Naive thymus-derived CD4-positive, alpha-beta T cell (primary cell): ENCODE measurements at regions of chr1 and their contacts with region 1.

Region 1: GRCh38 chr1:218330043-218330623 is 15.0 kb upstream of the TGFB2 start:
- DNase-seq: peak in 4 of 9 donors; percentile 17 to 41 (median 32)
- ATAC-seq: peak; percentile 73
- H3K4me3 ChIP-seq: no peak overlapping the region
- H3K4me3 Mint-ChIP-seq: no peak overlapping the region
- H3K27ac ChIP-seq: no peak overlapping the region
- H3K27ac Mint-ChIP-seq: no peak overlapping the region
- H3K4me1 ChIP-seq: no peaks in the 10 kb centered on the region
- H3K4me1 Mint-ChIP-seq: peaks cover 0 to 3% (median 0%) of the 10 kb centered on the region in 7 donors
- H3K27me3 ChIP-seq: no peaks in the 10 kb centered on the region
- H3K27me3 Mint-ChIP-seq: no peaks in the 10 kb centered on the region

Region 2: DNA sequence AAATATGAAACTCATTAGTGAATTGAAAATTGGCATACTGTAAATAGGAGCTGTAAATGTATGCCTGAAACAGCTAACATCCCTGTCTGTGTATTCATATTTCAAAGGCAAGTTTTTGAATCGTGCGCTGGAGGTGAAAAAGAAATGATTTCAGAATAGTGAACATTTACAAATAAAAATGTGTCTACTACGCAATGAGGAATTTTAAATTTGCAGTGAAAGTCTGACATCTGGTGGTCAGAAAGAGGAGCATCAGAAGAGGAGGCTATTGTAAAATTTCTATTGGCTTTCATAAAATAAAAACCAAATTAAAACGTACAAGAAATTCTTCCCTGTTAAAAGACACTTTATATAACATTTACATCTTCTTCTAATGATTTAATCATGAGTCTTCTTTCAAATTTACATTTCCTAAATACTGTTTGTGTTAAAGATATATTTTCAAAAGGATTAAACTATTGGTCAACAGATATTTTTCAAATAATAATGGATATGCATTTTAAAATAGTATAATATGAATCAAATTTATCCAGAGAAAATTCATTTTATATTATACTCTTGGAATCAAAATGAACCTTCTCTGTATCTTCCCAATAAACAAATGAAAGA is 158.7 kb before region 1 on chr1:
- CTCF ChIA-PET with region 1: no interaction called
- POLR2A ChIA-PET with region 1: no interaction called
- intact Hi-C with region 1: no loop called
- DNase-seq: no peak
- ATAC-seq: no peak
- H3K4me3 ChIP-seq: no peak overlapping the region
- H3K4me3 Mint-ChIP-seq: no peak overlapping the region
- H3K27ac ChIP-seq: no peak overlapping the region
- H3K27ac Mint-ChIP-seq: no peak overlapping the region
- H3K4me1 ChIP-seq: no peaks in the 10 kb centered on the region
- H3K4me1 Mint-ChIP-seq: peaks cover 0 to 2% (median 0%) of the 10 kb centered on the region in 7 donors
- H3K27me3 ChIP-seq: no peaks in the 10 kb centered on the region
- H3K27me3 Mint-ChIP-seq: peaks cover 20 to 59% (median 29%) of the 10 kb centered on the region in 5 donors

Region 3: GRCh38 chr1:218303176-218303879 is 26.8 kb before region 1 on chr1:
- CTCF ChIA-PET with region 1: no interaction called
- POLR2A ChIA-PET with region 1: no interaction called
- intact Hi-C with region 1: no loop called
- DNase-seq: no peak
- ATAC-seq: no peak
- H3K4me3 ChIP-seq: no peak overlapping the region
- H3K4me3 Mint-ChIP-seq: no peak overlapping the region
- H3K27ac ChIP-seq: no peak overlapping the region
- H3K27ac Mint-ChIP-seq: no peak overlapping the region
- H3K4me1 ChIP-seq: no peaks in the 10 kb centered on the region
- H3K4me1 Mint-ChIP-seq: peaks cover 1 to 32% (median 23%) of the 10 kb centered on the region in 7 donors
- H3K27me3 ChIP-seq: no peaks in the 10 kb centered on the region
- H3K27me3 Mint-ChIP-seq: no peaks in the 10 kb centered on the region

Region 4: DNA sequence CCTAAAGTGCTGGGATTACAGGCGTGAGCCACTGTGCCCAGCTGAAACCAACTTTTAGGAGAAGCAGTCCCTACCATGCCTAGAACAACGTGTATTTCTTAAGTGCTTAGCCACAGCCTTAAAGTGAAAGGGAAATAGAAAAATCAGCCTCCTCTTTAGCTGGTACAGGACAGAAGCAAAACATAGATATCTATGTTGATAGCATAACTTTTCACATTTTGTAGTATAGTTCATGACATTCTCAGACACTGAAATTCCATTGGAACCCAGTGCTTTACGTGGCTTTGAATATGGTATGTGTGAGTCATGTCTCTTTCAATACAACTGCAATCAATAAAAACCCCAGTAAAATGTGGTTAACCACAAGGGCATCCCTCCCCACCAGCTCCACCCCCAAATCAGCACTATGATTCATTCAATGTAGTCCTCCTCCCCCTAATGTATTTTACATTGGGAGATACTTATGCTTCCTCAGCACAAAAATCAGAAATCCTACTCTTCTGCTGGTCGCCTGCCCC is 47.1 kb after region 1 on chr1:
- CTCF ChIA-PET with region 1: no interaction called
- POLR2A ChIA-PET with region 1: no interaction called
- intact Hi-C with region 1: loop called in 1 of 2 experiments (anchors 1 kb)
- DNase-seq: peak in 8 of 9 donors; percentile 3 to 68 (median 8)
- ATAC-seq: peak; percentile 77
- H3K4me3 ChIP-seq: no peak overlapping the region
- H3K4me3 Mint-ChIP-seq: peak overlapping the region in 1 of 10 donors; percentile 23
- H3K27ac ChIP-seq: no peak overlapping the region
- H3K27ac Mint-ChIP-seq: no peak overlapping the region
- H3K4me1 ChIP-seq: no peaks in the 10 kb centered on the region
- H3K4me1 Mint-ChIP-seq: peaks cover 0 to 10% (median 7%) of the 10 kb centered on the region in 7 donors
- H3K27me3 ChIP-seq: no peaks in the 10 kb centered on the region
- H3K27me3 Mint-ChIP-seq: peaks cover 14 to 35% (median 28%) of the 10 kb centered on the region in 5 donors

Region 5: GRCh38 chr1:218642033-218642998 is 312.2 kb after region 1 on chr1:
- CTCF ChIA-PET with region 1: no interaction called
- POLR2A ChIA-PET with region 1: no interaction called
- intact Hi-C with region 1: no loop called
- DNase-seq: no peak
- ATAC-seq: no peak
- H3K4me3 ChIP-seq: no peak overlapping the region
- H3K4me3 Mint-ChIP-seq: no peak overlapping the region
- H3K27ac ChIP-seq: no peak overlapping the region
- H3K27ac Mint-ChIP-seq: no peak overlapping the region
- H3K4me1 ChIP-seq: no peaks in the 10 kb centered on the region
- H3K4me1 Mint-ChIP-seq: no peaks in the 10 kb centered on the region
- H3K27me3 ChIP-seq: no peaks in the 10 kb centered on the region
- H3K27me3 Mint-ChIP-seq: peaks cover 0 to 6% (median 0%) of the 10 kb centered on the region in 5 donors

Region 6: DNA sequence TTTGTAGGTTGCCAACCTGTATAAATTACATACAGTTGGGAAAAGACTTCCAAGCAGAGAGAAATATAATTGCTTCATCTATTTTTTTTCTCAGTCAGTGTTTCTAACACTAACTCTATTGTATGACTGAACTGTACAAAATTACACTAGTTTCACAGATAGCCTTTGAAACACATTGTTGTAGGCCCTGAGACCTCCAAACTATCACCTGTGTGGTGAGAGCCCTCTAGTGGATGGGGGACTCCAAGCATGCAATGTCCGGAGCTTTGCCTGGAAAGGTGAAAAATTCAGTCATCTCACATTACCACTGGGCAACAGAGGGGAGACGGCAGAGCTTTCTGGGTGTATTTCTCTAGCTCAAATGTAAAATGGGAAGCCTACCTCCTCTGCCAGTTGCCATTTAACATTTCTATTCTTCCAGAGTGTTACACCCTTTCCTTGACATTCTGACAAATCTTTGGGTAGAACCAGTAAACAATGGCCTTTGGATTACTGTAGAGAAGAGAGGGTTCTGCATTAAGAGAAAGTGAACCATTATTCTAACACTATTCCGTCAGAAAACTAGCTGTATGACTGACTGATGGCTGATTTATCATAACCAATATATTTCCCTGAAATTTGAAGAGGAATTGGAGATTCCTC is 1055.8 kb after region 1 on chr1:
- CTCF ChIA-PET with region 1: no interaction called
- POLR2A ChIA-PET with region 1: no interaction called
- intact Hi-C with region 1: loop called in 1 of 2 experiments (anchors 1 kb)
- DNase-seq: peak in 2 of 9 donors; percentile 0 to 6
- ATAC-seq: no peak
- H3K4me3 ChIP-seq: no peak overlapping the region
- H3K4me3 Mint-ChIP-seq: no peak overlapping the region
- H3K27ac ChIP-seq: no peak overlapping the region
- H3K27ac Mint-ChIP-seq: no peak overlapping the region
- H3K4me1 ChIP-seq: no peaks in the 10 kb centered on the region
- H3K4me1 Mint-ChIP-seq: no peaks in the 10 kb centered on the region
- H3K27me3 ChIP-seq: no peaks in the 10 kb centered on the region
- H3K27me3 Mint-ChIP-seq: peaks cover 0 to 8% (median 0%) of the 10 kb centered on the region in 5 donors

Region 7: GRCh38 chr1:219660666-219661463 is 1330.7 kb after region 1 on chr1:
- CTCF ChIA-PET with region 1: no interaction called
- POLR2A ChIA-PET with region 1: no interaction called
- intact Hi-C with region 1: loop called in 1 of 2 experiments (anchors 5 kb)
- DNase-seq: peak in 2 of 9 donors; percentile 9 to 48
- ATAC-seq: peak; percentile 57
- H3K4me3 ChIP-seq: no peak overlapping the region
- H3K4me3 Mint-ChIP-seq: peak overlapping the region in 4 of 10 donors; percentile 24 to 67 (median 54)
- H3K27ac ChIP-seq: no peak overlapping the region
- H3K27ac Mint-ChIP-seq: no peak overlapping the region
- H3K4me1 ChIP-seq: no peaks in the 10 kb centered on the region
- H3K4me1 Mint-ChIP-seq: peaks cover 0 to 5% (median 4%) of the 10 kb centered on the region in 7 donors
- H3K27me3 ChIP-seq: no peaks in the 10 kb centered on the region
- H3K27me3 Mint-ChIP-seq: peaks cover 9 to 48% (median 34%) of the 10 kb centered on the region in 5 donors